Vagina (tissue), 2 donors: ENCODE measurements at regions of chr3 and their contacts with region 1.

Region 1: GRCh38 chr3:45656575-45657363 is 32.4 kb upstream of the SACM1L start:
- DNase-seq: no peak
- H3K4me3 ChIP-seq: no peak overlapping the region
- H3K27ac ChIP-seq: no peak overlapping the region
- H3K4me1 ChIP-seq: peaks cover 8% of the 10 kb centered on the region
- H3K27me3 ChIP-seq: no peaks in the 10 kb centered on the region
- CTCF ChIP-seq: peak; percentile 82 to 98 (median 93)
- POLR2A ChIP-seq: no peak

Region 2: GRCh38 chr3:45037734-45038455 is 618.9 kb before region 1 on chr3:
- intact Hi-C with region 1: loop called (anchors 5 kb)
- DNase-seq: peak in 1 of 2 donors; percentile 93
- H3K4me3 ChIP-seq: no peak overlapping the region
- H3K27ac ChIP-seq: no peak overlapping the region
- H3K4me1 ChIP-seq: peaks cover 32% of the 10 kb centered on the region
- H3K27me3 ChIP-seq: no peaks in the 10 kb centered on the region
- CTCF ChIP-seq: peak in 2 of 3 experiments; percentile 92 to 99
- POLR2A ChIP-seq: no peak

Region 3: GRCh38 chr3:45224824-45225464 is 431.8 kb before region 1 on chr3:
- intact Hi-C with region 1: loop called (anchors 10 kb)
- DNase-seq: no peak
- H3K4me3 ChIP-seq: peak overlapping the region; percentile 48 to 74
- H3K27ac ChIP-seq: no peak overlapping the region
- H3K4me1 ChIP-seq: peaks cover 18% of the 10 kb centered on the region
- H3K27me3 ChIP-seq: no peaks in the 10 kb centered on the region
- CTCF ChIP-seq: peak in 1 of 3 experiments; percentile 28
- POLR2A ChIP-seq: no peak

Region 4: DNA sequence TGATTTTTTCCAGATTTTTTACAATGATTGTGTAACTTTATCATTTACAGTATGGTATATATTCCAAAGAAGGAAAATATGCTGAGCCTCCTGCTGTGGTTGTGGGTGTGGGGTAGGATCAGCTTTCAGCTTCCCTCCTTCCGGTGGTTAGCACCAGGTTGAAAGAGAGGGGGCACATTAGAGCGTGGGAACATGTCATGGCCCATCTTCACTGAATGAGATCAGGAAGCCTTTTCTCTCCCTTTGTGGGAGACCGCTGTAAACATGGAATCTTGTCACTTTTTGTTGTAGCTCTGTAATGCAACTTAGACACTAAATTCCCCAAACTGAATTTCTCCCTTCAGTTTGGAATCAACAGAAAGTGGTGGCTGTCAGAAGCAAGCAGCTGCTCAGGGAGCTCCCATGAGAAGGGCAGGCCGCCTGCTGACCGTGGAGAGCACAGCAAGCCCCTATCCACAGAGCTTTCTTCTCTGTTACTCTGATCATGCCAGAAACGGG is 148.9 kb before region 1 on chr3:
- intact Hi-C with region 1: loop called (anchors 5 kb)
- DNase-seq: no peak
- H3K4me3 ChIP-seq: no peak overlapping the region
- H3K27ac ChIP-seq: peak overlapping the region; percentile 32
- H3K4me1 ChIP-seq: peaks cover 22% of the 10 kb centered on the region
- H3K27me3 ChIP-seq: no peaks in the 10 kb centered on the region
- CTCF ChIP-seq: peak in 1 of 3 experiments; percentile 13
- POLR2A ChIP-seq: no peak

Region 5: GRCh38 chr3:45593708-45594609 is 62.8 kb before region 1 on chr3:
- intact Hi-C with region 1: loop called (anchors 2 kb)
- DNase-seq: no peak
- H3K4me3 ChIP-seq: peak overlapping the region; percentile 53 to 54
- H3K27ac ChIP-seq: peak overlapping the region; percentile 61
- H3K4me1 ChIP-seq: peaks cover 52% of the 10 kb centered on the region
- H3K27me3 ChIP-seq: no peaks in the 10 kb centered on the region
- CTCF ChIP-seq: no peak
- POLR2A ChIP-seq: peak in 1 of 2 donors; percentile 37

Region 6: GRCh38 chr3:45852828-45853227 is 196.1 kb after region 1 on chr3:
- intact Hi-C with region 1: no loop called
- DNase-seq: no peak
- H3K4me3 ChIP-seq: no peak overlapping the region
- H3K27ac ChIP-seq: no peak overlapping the region
- H3K4me1 ChIP-seq: no peaks in the 10 kb centered on the region
- H3K27me3 ChIP-seq: no peaks in the 10 kb centered on the region
- CTCF ChIP-seq: no peak
- POLR2A ChIP-seq: no peak